SK-N-SH (cell line): ENCODE measurements at regions of chr11 and their contacts with region 1.

Region 1: GRCh38 chr11:111283945-111284481 is 14.3 kb upstream of the POU2AF3 start:
- DNase-seq: peak; percentile 48
- H3K4me3 ChIP-seq: no peak overlapping the region; a peak in 1 of 4 replicates
- H3K27ac ChIP-seq: no peak overlapping the region
- H3K4me1 ChIP-seq: peaks cover 0 to 17% of the 10 kb centered on the region in 2 experiments; a peak in 1 of 4 replicates
- H3K27me3 ChIP-seq: no peaks in the 10 kb centered on the region
- CTCF ChIP-seq: no peak
- EP300 ChIP-seq: no peak
- RAD21 ChIP-seq: no peak

Region 2: DNA sequence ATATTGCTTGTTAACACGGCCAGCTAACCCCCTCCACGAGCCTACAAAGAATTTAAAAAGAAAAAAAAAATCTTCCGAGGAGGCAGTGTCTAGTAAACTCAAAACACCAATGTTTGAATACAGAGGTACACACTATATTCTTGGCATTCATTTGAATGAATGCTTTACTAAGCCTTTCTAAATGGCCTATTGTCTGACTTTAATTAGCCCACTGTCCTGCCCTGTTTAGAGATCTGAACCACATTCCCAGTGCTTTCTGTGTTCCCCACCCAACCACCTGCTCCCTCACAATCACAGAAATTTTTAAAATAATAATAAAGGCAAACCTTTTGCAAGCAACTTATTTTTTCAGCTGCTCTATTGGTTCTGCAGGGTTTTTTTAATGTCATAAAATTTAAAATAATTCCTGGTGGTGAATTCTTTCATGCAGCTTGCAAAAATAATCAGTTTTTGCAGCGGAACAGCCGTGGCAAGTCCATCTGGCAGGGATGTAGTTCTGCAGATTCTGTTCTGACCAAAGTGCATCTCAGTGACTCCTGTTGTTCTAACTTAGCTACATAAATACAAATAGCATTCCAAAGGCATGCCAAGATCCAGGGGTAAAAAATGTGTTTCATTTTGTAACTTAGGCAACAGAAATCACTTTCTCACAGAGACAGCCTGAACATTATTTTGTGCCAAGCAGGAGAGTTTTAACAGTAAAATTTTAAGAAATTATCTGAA is 14.7 kb before region 1 on chr11:
- CTCF ChIA-PET with region 1: interaction called, 27 read pairs
- POLR2A ChIA-PET with region 1: no interaction called
- DNase-seq: no peak
- H3K4me3 ChIP-seq: no peak overlapping the region
- H3K27ac ChIP-seq: no peak overlapping the region
- H3K4me1 ChIP-seq: no peaks in the 10 kb centered on the region
- H3K27me3 ChIP-seq: no peaks in the 10 kb centered on the region; the same call in none of the 2 replicates
- CTCF ChIP-seq: no peak
- EP300 ChIP-seq: no peak
- RAD21 ChIP-seq: no peak

Region 3: GRCh38 chr11:111299101-111300026 is 15.4 kb after region 1 on chr11:
- CTCF ChIA-PET with region 1: interaction called, 56 read pairs
- POLR2A ChIA-PET with region 1: no interaction called
- DNase-seq: peak; percentile 92
- H3K4me3 ChIP-seq: peak overlapping the region; percentile 54 to 60
- H3K27ac ChIP-seq: no peak overlapping the region
- H3K4me1 ChIP-seq: peaks cover 5% of the 10 kb centered on the region in 2 experiments; a peak in 2 of 4 replicates
- H3K27me3 ChIP-seq: peaks cover 27% of the 10 kb centered on the region; the same call in 1 of the 2 replicates
- CTCF ChIP-seq: peak; percentile 60
- EP300 ChIP-seq: no peak
- RAD21 ChIP-seq: peak; percentile 58

Region 4: GRCh38 chr11:111422494-111423249 is 138.7 kb after region 1 on chr11:
- CTCF ChIA-PET with region 1: interaction called, 305 read pairs
- POLR2A ChIA-PET with region 1: no interaction called
- DNase-seq: peak; percentile 64
- H3K4me3 ChIP-seq: peak overlapping the region in 1 of 2 experiments; percentile 26; a peak in 1 of 4 replicates
- H3K27ac ChIP-seq: no peak overlapping the region
- H3K4me1 ChIP-seq: peaks cover 0 to 6% of the 10 kb centered on the region in 2 experiments; a peak in 1 of 4 replicates
- H3K27me3 ChIP-seq: no peaks in the 10 kb centered on the region; the same call in 1 of the 2 replicates
- CTCF ChIP-seq: peak; percentile 68
- EP300 ChIP-seq: no peak
- RAD21 ChIP-seq: peak; percentile 91

Region 5: DNA sequence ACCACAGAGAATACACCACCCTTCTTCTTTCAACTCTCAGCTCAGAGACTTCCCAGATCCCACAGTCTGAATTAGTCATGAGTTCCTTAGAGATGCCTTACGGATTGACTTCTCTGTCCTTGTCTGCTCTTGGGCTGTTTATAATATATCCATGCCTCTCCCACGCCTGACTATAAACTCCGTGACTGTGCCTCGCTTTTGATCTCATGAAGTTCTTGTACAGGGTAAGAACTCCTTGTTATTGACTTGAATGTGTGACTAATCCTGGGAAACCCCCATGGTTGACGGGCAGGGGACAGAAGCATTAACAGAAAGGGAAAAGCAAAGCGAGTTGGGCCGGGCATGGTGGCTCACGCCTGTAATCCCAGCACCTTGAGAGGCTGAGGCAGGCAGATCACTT is 157.4 kb after region 1 on chr11:
- CTCF ChIA-PET with region 1: interaction called, 147 read pairs
- POLR2A ChIA-PET with region 1: no interaction called
- DNase-seq: no peak
- H3K4me3 ChIP-seq: no peak overlapping the region
- H3K27ac ChIP-seq: no peak overlapping the region
- H3K4me1 ChIP-seq: peaks cover 6 to 7% of the 10 kb centered on the region in 2 experiments; a peak in 2 of 4 replicates
- H3K27me3 ChIP-seq: no peaks in the 10 kb centered on the region
- CTCF ChIP-seq: no peak
- EP300 ChIP-seq: no peak
- RAD21 ChIP-seq: no peak

Region 6: GRCh38 chr11:111446404-111447111 is 162.5 kb after region 1 on chr11:
- CTCF ChIA-PET with region 1: interaction called, 147 read pairs
- POLR2A ChIA-PET with region 1: no interaction called
- DNase-seq: peak; percentile 86
- H3K4me3 ChIP-seq: no peak overlapping the region; a peak in 1 of 4 replicates
- H3K27ac ChIP-seq: no peak overlapping the region
- H3K4me1 ChIP-seq: peaks cover 0 to 5% of the 10 kb centered on the region in 2 experiments; a peak in 1 of 4 replicates
- H3K27me3 ChIP-seq: no peaks in the 10 kb centered on the region
- CTCF ChIP-seq: peak; percentile 87
- EP300 ChIP-seq: no peak
- RAD21 ChIP-seq: peak; percentile 97

Region 7: DNA sequence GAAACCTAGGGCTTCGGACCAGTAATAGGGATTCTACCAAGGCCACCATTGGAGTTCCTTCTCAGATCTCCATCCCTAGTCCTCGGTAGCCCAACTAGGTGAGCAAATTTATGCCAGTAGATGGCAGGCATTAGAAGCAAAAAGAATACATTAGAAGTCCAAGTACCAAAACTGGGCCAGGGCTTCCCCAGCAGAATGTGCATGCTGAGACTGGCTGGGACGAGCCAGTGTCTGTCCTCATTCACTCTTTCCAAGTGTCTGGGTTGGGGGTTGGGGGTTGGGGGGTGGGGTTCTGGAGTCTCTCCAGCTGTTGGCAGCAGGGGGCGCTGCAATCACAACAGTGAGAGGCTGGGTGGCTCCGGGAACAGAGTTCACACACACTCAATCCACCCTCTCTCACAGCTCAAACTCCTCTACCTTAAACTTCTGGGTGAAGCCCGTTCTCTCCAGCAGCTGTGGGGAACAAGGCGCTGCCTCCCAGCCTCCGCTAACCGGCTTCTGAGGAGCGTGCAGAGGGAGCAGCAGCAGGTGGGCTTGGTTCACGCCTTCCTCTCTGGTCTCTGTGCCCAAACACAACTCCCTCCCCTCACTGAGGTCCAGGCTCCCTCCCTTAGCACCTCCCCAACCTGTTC is 170.7 kb after region 1 on chr11:
- CTCF ChIA-PET with region 1: interaction called, 18 read pairs
- POLR2A ChIA-PET with region 1: no interaction called
- DNase-seq: peak; percentile 78
- H3K4me3 ChIP-seq: no peak overlapping the region
- H3K27ac ChIP-seq: peak overlapping the region in 1 of 2 experiments; percentile 48; a peak in 2 of 4 replicates
- H3K4me1 ChIP-seq: peaks cover 0 to 6% of the 10 kb centered on the region in 2 experiments; a peak in 2 of 4 replicates
- H3K27me3 ChIP-seq: no peaks in the 10 kb centered on the region
- CTCF ChIP-seq: peak; percentile 53
- EP300 ChIP-seq: peak in 1 of 2 experiments; percentile 11; a peak in 1 of 4 replicates
- RAD21 ChIP-seq: peak; percentile 67